ENCODE measurements at regions of chr3 and their contacts with region 1.

Region 1: GRCh38 chr3:132641837-132642538 is 17.6 kb downstream of the ACAD11 start:
- DNase-seq: peak; percentile 72
- H3K4me3 ChIP-seq: no peak overlapping the region
- H3K27ac ChIP-seq: no peak overlapping the region
- H3K4me1 ChIP-seq: peaks cover 29% of the 10 kb centered on the region
- H3K27me3 ChIP-seq: no peaks in the 10 kb centered on the region
- CTCF ChIP-seq: peak; percentile 37 to 45
- POLR2A ChIP-seq: no peak

Region 2: DNA sequence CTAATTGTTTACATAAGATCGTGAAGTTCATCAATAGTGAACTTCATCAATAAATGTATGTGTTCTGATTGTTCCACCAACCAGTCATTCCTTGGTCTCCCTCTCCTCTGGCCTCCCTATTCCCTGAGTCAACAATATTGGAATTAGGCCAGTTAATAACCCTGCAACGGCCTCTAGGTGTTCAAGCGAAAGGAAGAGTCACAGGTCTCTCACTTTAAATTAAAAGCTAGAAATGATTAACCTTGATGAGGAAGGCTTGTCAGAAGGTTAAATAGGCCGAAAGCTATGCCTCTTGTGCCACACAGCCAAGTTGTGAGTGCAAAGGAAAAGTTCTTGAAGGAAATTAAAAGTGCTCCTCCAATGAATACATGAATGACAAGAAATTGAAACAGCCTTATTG is 134.3 kb before region 1 on chr3:
- CTCF ChIA-PET with region 1: interaction called, 19 read pairs
- POLR2A ChIA-PET with region 1: no interaction called
- dilution Hi-C with region 1: no loop called
- intact Hi-C with region 1: no loop called
- DNase-seq: no peak
- H3K4me3 ChIP-seq: no peak overlapping the region
- H3K27ac ChIP-seq: no peak overlapping the region
- H3K4me1 ChIP-seq: no peaks in the 10 kb centered on the region
- H3K27me3 ChIP-seq: no peaks in the 10 kb centered on the region
- CTCF ChIP-seq: no peak
- POLR2A ChIP-seq: no peak

Region 3: GRCh38 chr3:132530624-132531023 is 111.4 kb before region 1 on chr3:
- CTCF ChIA-PET with region 1: interaction called, 423 read pairs
- POLR2A ChIA-PET with region 1: interaction called, 4 read pairs
- dilution Hi-C with region 1: loop called (anchors 25 kb)
- intact Hi-C with region 1: no loop called
- DNase-seq: no peak
- H3K4me3 ChIP-seq: no peak overlapping the region
- H3K27ac ChIP-seq: no peak overlapping the region
- H3K4me1 ChIP-seq: no peaks in the 10 kb centered on the region
- H3K27me3 ChIP-seq: no peaks in the 10 kb centered on the region
- CTCF ChIP-seq: no peak
- POLR2A ChIP-seq: no peak

Region 4: GRCh38 chr3:132543036-132543739 is 98.8 kb before region 1 on chr3:
- CTCF ChIA-PET with region 1: interaction called, 423 read pairs
- POLR2A ChIA-PET with region 1: no interaction called
- dilution Hi-C with region 1: loop called (anchors 25 kb)
- intact Hi-C with region 1: no loop called
- DNase-seq: peak; percentile 89
- H3K4me3 ChIP-seq: no peak overlapping the region
- H3K27ac ChIP-seq: peak overlapping the region; percentile 32
- H3K4me1 ChIP-seq: peaks cover 18% of the 10 kb centered on the region
- H3K27me3 ChIP-seq: no peaks in the 10 kb centered on the region
- CTCF ChIP-seq: no peak
- POLR2A ChIP-seq: no peak

Region 5: GRCh38 chr3:132595014-132595413 is 47.0 kb before region 1 on chr3:
- CTCF ChIA-PET with region 1: interaction called, 35 read pairs
- POLR2A ChIA-PET with region 1: no interaction called
- dilution Hi-C with region 1: no loop called
- intact Hi-C with region 1: loop called (anchors 2 kb)
- DNase-seq: peak; percentile 65
- H3K4me3 ChIP-seq: no peak overlapping the region
- H3K27ac ChIP-seq: peak overlapping the region; percentile 90
- H3K4me1 ChIP-seq: peaks cover 40% of the 10 kb centered on the region
- H3K27me3 ChIP-seq: no peaks in the 10 kb centered on the region
- CTCF ChIP-seq: no peak
- POLR2A ChIP-seq: no peak

Region 6: DNA sequence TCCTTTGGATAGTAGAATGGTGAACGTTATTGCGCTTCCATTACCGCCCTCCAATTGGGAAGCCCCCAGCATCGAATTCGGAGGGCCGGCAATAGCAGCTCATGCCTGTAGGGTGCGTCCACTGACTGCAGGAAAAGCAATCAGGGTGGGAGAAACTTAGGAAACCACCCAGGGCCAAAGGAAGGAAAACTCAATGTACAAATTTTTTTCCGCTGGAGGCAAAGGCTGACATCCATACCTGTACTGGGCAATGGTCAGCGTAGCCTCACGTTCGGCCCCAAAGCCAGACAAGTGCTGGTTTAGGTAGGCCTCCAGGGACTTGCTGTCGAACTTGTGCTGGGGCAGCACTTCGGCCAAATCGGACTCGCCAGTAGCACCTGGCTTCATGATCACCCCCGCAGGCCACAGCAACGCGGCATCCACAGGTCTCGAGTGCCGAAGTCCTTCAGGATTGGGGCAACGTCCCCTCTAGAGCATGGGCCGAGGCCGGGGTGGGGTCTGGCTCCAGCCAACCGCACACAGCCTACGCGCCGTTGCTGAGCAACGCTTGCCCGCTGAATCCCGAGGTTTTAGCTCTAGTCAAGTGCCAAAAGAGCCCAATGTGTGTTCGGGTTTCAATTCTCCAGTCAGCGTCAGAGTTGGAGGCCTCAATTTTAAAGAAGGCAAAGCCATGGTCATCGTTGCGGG is 17.5 kb after region 1 on chr3 and contains the start of gene ACAD11:
- CTCF ChIA-PET with region 1: interaction called, 28 read pairs
- POLR2A ChIA-PET with region 1: interaction called, 3 read pairs
- dilution Hi-C with region 1: no loop called
- intact Hi-C with region 1: no loop called
- DNase-seq: peak; percentile 85
- H3K4me3 ChIP-seq: peak within 1 kb of the TSS; percentile 43 to 71 (median 70)
- H3K27ac ChIP-seq: peak within 1 kb of the TSS; percentile 68
- H3K4me1 ChIP-seq: peaks cover 28% of the 10 kb centered on the region
- H3K27me3 ChIP-seq: no peaks in the 10 kb centered on the region
- CTCF ChIP-seq: peak; percentile 66 to 70
- POLR2A ChIP-seq: no peak
- total RNA-seq, gene ACAD11: 9.6 and 15.2 TPM in 2 replicates

Region 7: GRCh38 chr3:132879636-132880035 is 237.6 kb after region 1 on chr3:
- CTCF ChIA-PET with region 1: no interaction called
- POLR2A ChIA-PET with region 1: no interaction called
- dilution Hi-C with region 1: no loop called
- intact Hi-C with region 1: no loop called
- DNase-seq: no peak
- H3K4me3 ChIP-seq: no peak overlapping the region
- H3K27ac ChIP-seq: no peak overlapping the region
- H3K4me1 ChIP-seq: no peaks in the 10 kb centered on the region
- H3K27me3 ChIP-seq: peaks cover 0 to 2% of the 10 kb centered on the region in 2 experiments
- CTCF ChIP-seq: no peak
- POLR2A ChIP-seq: no peak

Measured in endothelial cell of umbilical vein (primary cell).